Natural killer cell (primary cell): ENCODE measurements at regions of chr6 and their contacts with region 1.

Region 1: DNA sequence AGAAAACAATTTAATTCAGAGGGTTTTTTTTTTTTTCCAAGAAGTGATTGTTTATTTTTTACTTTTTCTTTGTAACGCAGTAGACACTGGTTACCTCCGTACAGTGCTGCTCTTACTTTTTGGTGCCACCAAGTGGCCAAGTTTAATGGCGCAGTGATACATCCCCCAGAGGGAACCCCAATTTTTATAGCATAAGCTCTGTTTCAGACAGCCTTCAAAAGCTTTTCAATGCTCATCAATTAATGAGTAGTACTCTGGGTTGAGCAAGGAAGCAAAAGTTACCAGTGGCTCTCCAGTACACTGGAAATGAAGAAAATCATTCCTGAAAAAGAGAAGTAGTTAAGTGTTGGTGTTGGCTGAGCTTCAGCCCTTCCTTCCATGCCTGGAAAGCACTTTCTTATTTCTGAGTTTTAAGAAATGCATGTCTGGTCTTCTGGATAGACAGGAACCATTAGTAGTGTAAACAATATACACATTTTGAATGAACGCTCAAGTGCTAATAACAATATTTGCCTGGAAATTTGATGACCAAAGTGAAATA is 129.1 kb upstream of the SMLR1 start:
- DNase-seq: peak in 1 of 2 donors; percentile 73
- ATAC-seq: peak; percentile 77 to 84 (median 79)
- H3K4me3 ChIP-seq: no peak overlapping the region
- H3K4me3 Mint-ChIP-seq: no peak overlapping the region
- H3K27ac ChIP-seq: no peak overlapping the region
- H3K27ac Mint-ChIP-seq: no peak overlapping the region
- H3K4me1 ChIP-seq: peaks cover 14% of the 10 kb centered on the region
- H3K4me1 Mint-ChIP-seq: peaks cover 14 to 20% of the 10 kb centered on the region in 2 donors
- H3K27me3 ChIP-seq: no peaks in the 10 kb centered on the region
- H3K27me3 Mint-ChIP-seq: peaks cover 0 to 7% of the 10 kb centered on the region in 2 donors
- CTCF ChIP-seq: peak; percentile 68

Region 2: DNA sequence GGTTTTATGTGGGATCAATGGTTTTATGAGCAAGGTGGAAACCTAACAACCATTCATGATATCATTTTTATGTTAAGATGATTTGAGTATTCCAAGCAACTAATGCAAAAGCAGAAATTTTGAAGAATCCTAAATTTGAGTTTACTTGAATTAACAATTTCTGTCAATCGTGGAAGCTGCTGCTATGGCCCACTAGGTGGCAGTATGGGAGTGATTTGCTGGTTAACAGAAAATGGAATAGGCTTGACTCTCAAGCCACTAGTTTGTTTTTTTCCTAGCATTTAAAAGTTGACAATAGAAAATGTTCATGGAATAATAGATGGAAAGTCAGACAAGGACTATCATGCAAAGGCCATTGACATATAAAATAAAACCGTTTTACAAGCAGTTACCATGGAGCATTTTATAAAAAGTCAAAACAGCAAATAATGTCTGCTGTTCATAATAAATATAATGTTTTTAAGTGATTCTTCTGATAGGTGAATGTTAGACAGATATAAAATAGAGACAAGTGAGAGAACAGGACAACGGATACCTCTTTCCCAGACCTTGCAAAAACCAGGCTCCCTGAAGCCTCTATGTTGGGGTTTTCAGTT is 375.3 kb before region 1 on chr6:
- intact Hi-C with region 1: loop called (anchors 1 kb)
- DNase-seq: peak; percentile 21 to 86
- ATAC-seq: peak in 2 of 3 donors; percentile 62 to 71
- H3K4me3 ChIP-seq: no peak overlapping the region
- H3K4me3 Mint-ChIP-seq: no peak overlapping the region
- H3K27ac ChIP-seq: no peak overlapping the region
- H3K27ac Mint-ChIP-seq: no peak overlapping the region
- H3K4me1 ChIP-seq: no peaks in the 10 kb centered on the region
- H3K4me1 Mint-ChIP-seq: no peaks in the 10 kb centered on the region
- H3K27me3 ChIP-seq: no peaks in the 10 kb centered on the region
- H3K27me3 Mint-ChIP-seq: peaks cover 5 to 8% of the 10 kb centered on the region in 2 donors
- CTCF ChIP-seq: peak; percentile 86

Region 3: GRCh38 chr6:130776287-130776925 is 78.3 kb after region 1 on chr6:
- intact Hi-C with region 1: no loop called
- DNase-seq: no peak
- ATAC-seq: peak; percentile 71 to 80 (median 73)
- H3K4me3 ChIP-seq: no peak overlapping the region
- H3K4me3 Mint-ChIP-seq: peak overlapping the region; percentile 48
- H3K27ac ChIP-seq: peak overlapping the region; percentile 37
- H3K27ac Mint-ChIP-seq: peak overlapping the region; percentile 50 to 79
- H3K4me1 ChIP-seq: peaks cover 18% of the 10 kb centered on the region
- H3K4me1 Mint-ChIP-seq: peaks cover 40 to 49% of the 10 kb centered on the region in 2 donors
- H3K27me3 ChIP-seq: no peaks in the 10 kb centered on the region
- H3K27me3 Mint-ChIP-seq: no peaks in the 10 kb centered on the region
- CTCF ChIP-seq: no peak